ENCODE measurements at regions of chr17 and their contacts with region 1.

Region 1: DNA sequence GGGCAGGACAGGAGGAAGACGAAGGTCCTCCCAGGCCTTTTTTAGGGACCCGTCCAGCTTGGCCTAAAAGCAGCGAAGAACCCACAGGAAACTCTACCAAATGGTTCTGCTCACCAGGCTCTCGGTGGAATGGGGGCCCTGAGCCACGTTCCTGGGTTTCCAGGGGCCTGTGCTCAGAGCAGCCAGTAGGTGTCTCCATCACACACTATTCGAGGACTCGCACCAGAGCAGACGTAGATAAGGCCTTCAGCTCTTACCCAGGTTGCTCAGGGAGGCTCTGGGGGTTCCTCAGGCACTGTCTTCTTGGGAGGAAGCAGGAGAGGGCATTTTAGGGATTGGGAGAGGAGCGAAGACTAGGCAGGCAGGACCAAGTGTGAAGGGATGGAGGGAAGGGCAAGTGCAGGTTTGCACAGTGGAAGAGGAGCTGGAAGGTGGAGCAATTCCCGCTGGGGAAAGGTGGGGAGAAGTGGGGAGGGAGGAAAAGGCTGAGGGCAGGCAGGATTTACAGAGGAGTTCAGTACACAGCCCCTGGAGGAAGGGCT is 157.1 kb downstream of the RGS9 start:
- DNase-seq: no peak
- H3K4me3 ChIP-seq: no peak overlapping the region
- H3K27ac ChIP-seq: no peak overlapping the region
- H3K4me1 ChIP-seq: peaks cover 0 to 9% (median 8%) of the 10 kb centered on the region in 4 donors
- H3K27me3 ChIP-seq: no peaks in the 10 kb centered on the region
- CTCF ChIP-seq: peak; percentile 75 to 84 (median 78)
- EP300 ChIP-seq: no peak
- POLR2A ChIP-seq: no peak

Region 2: DNA sequence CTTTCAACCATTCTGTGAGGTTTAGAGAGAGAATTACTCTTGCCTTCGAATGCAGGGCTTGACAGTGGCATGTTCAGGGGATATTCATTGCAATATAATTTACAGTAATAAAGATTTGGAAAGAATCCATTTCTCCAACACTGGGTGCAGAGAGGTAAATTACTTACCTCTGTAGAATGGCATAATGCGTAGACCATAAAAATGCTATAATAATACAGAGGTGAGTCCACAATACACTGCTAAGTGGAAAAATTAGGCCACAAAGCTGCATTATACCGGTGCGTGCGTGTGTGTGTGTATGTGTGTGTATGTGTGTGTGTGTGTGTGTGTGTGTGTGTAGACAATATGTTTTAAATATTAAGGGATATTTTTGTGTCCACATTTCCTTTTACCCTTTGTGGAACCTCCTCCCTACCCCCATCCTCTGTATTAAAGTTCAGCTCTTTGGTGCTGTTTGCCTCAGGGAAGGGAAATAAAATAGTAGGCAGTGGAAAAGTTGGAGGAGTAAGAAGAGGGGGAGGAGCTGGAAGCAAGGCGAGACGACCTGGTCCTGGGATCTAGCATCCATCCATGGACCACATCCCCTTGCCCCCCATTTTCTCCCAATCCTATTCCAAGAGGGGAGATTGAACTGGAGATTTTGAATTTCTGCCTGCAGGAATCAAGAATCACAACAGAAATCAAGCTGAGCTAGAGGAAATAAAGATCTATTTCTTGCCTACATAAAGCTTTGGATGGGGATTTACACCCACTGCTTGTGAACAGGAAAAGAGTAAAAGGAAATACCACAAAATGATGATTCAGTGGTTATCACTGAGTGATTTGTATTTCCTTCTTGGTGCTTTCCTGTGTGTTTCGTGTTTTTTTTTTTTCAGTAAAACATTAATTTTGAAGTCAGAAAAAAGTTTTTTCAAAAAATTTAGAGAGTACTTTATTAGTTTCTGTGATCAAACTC is 32.3 kb before region 1 on chr17:
- intact Hi-C with region 1: no loop called
- DNase-seq: no peak
- H3K4me3 ChIP-seq: no peak overlapping the region
- H3K27ac ChIP-seq: no peak overlapping the region
- H3K4me1 ChIP-seq: no peaks in the 10 kb centered on the region
- H3K27me3 ChIP-seq: no peaks in the 10 kb centered on the region
- CTCF ChIP-seq: no peak
- EP300 ChIP-seq: no peak
- POLR2A ChIP-seq: no peak

Region 3: GRCh38 chr17:66165513-66166123 is 871.4 kb after region 1 on chr17:
- intact Hi-C with region 1: loop called (anchors 5 kb)
- DNase-seq: no peak
- H3K4me3 ChIP-seq: no peak overlapping the region
- H3K27ac ChIP-seq: no peak overlapping the region
- H3K4me1 ChIP-seq: peaks cover 0 to 29% (median 25%) of the 10 kb centered on the region in 4 donors
- H3K27me3 ChIP-seq: no peaks in the 10 kb centered on the region
- CTCF ChIP-seq: peak; percentile 75 to 81 (median 76)
- EP300 ChIP-seq: no peak
- POLR2A ChIP-seq: no peak

Measured in esophagus muscularis mucosa (tissue), 4 donors.